Activated CD4-positive, alpha-beta memory T cell treated with anti-CD3 and anti-CD28 coated beads, Interleukin-2, amount 10 ng/mL, durations not matched to agents 7 days and 5 days (primary cell): ENCODE measurements at regions of chr1 and their contacts with region 1.

Region 1: GRCh38 chr1:27044613-27045151 is 32.0 kb upstream of the TENT5B start:
- DNase-seq: peak; percentile 90
- H3K4me3 Mint-ChIP-seq: peak overlapping the region; percentile 76
- H3K27ac Mint-ChIP-seq: peak overlapping the region; percentile 78
- H3K4me1 Mint-ChIP-seq: peaks cover 24% of the 10 kb centered on the region
- H3K27me3 Mint-ChIP-seq: peaks cover 4% of the 10 kb centered on the region

Region 2: DNA sequence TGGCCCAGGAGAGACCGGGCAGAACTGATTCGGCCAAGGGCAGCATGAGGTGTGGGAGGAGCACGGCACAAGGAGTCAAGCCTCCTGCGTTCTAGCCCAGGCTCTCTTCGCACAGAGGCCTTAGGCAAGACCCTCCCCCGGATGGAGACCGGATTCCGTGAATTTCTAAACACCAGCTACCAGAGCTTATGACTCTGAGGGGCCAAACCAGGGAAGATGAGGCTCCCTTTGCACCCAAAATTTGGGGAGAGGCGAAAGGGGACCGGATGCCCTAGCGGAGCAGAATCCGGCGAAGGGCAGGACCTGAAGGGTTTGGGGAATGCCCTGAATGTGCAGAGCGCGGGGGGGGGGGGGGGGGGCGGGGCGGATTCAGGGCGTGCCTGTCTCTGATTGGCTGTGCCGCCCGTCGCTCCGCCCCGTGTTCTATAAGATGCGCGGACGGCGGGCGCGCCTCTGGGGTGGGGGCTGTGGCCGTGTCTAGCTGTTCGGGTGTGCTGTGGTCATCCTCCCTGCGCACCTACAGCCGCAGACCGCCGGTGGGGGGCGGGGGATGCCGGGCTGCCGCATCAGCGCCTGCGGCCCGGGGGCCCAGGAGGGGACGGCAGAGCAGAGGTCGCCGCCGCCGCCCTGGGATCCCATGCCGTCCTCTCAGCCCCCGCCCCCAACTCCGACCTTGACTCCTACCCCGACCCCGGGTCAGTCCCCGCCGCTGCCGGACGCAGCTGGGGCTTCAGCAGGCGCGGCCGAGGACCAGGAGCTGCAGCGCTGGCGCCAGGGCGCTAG is 51.3 kb before region 1 on chr1 and contains the start of gene TRNP1:
- CTCF ChIA-PET with region 1: interaction called, 46 read pairs
- POLR2A ChIA-PET with region 1: no interaction called
- DNase-seq: peak; percentile 70
- H3K4me3 Mint-ChIP-seq: peak within 1 kb of the TSS; percentile 71
- H3K27ac Mint-ChIP-seq: no peak within 1 kb of the TSS
- H3K4me1 Mint-ChIP-seq: peaks cover 16% of the 10 kb centered on the region
- H3K27me3 Mint-ChIP-seq: peaks cover 57% of the 10 kb centered on the region
- total RNA-seq, gene TRNP1: not detected

Region 3: DNA sequence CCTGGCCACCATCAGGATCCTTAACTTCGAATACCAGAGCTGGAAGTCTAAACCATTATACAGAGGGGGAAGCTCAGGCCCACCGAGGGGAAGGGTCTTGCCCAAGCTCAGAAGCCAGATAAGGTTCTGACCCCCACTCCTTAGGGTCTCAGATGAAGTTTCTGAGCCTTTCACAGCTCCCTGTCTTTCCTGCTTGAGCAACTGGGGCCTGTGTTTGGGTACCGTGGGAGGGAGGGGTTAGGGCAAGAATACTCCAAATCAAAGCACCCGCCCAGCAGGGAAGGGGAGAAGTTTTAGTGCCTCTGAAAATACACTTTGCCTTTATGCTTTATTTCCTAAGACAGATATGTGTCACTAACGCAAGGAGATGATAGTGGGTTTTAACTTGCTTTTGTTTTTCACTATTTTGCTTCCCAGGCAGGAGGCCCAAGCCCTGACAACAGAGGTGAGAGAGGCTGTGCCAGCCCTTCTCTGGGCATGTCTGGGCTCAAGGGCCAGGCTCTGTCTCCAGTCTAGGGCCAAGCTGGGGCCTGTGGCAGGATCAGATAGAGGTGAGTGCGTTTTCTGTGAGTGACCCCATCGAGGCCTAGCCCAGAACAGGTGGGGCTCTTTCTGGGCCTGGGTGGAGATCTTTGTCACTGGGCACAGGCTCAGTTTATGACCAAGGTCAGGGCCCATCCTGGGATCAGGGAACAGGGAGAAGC is 11.5 kb before region 1 on chr1:
- CTCF ChIA-PET with region 1: interaction called, 17 read pairs
- POLR2A ChIA-PET with region 1: no interaction called
- DNase-seq: no peak
- H3K4me3 Mint-ChIP-seq: no peak overlapping the region
- H3K27ac Mint-ChIP-seq: no peak overlapping the region
- H3K4me1 Mint-ChIP-seq: no peaks in the 10 kb centered on the region
- H3K27me3 Mint-ChIP-seq: peaks cover 5% of the 10 kb centered on the region

Region 4: DNA sequence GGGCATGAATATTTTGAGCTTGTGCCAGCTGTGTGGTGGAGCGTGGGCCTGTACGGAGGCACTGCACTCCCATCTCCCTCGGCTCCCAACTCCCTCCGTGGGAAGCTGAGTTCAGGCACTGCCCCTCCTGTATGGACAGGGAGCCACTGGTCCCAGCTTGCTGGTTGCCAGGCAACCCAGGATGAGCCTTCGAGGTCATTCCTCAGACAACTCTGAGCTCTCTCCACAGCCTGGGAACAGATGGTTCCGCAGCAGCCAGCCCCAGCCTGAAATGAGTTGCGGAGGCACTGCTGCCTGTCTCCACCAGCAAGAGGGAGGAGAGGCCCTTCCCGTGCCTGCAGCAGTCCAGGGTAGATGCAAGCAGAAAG is 26.4 kb after region 1 on chr1:
- CTCF ChIA-PET with region 1: interaction called, 26 read pairs
- POLR2A ChIA-PET with region 1: no interaction called
- DNase-seq: no peak
- H3K4me3 Mint-ChIP-seq: no peak overlapping the region
- H3K27ac Mint-ChIP-seq: no peak overlapping the region
- H3K4me1 Mint-ChIP-seq: no peaks in the 10 kb centered on the region
- H3K27me3 Mint-ChIP-seq: no peaks in the 10 kb centered on the region

Region 5: DNA sequence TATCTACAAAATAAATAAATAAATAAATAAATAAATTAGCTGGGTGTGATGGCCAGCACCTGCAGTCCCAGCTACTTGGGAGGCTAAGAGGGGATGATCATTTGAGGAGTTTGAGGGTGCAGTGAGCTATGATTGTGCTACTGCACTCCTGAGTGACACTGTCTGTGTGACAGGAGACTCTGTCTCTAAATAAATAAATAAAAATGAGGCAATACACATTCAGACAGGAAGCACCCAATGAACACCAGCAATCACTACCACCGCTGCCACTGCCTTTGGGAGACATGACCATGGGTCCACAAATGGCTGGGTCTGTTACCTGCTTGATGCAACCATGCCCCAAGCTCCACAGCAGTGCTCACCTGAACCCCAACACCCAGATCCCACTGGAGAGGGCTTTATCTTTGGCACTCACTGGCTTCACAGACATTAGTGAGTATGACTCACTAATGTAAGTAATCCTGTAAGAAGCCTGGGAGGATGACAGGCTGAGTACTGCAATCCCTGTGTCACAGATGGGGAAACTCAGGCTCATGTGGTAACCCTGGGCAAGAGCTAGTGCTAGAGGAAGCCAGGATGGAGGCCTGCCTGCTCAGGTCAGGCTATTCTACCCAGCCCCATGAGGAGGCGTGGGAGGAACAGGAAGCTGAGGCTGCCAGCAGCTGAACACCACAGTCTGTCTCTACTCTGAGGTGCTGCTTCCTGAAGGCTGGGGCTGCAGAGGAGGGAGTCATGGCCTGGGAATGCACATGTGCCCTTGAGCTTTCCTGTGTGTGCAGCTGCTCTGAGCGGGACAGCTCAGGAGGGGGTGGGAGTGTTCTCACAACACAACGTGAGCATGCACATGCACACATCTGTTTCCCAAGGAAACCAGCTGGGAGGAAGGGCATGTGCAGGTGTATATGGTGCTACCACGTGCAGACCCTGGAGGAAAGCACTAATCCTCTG is 67.2 kb after region 1 on chr1:
- CTCF ChIA-PET with region 1: interaction called, 15 read pairs
- POLR2A ChIA-PET with region 1: no interaction called
- DNase-seq: peak; percentile 79
- H3K4me3 Mint-ChIP-seq: no peak overlapping the region
- H3K27ac Mint-ChIP-seq: peak overlapping the region; percentile 70
- H3K4me1 Mint-ChIP-seq: peaks cover 43% of the 10 kb centered on the region
- H3K27me3 Mint-ChIP-seq: no peaks in the 10 kb centered on the region

Region 6: DNA sequence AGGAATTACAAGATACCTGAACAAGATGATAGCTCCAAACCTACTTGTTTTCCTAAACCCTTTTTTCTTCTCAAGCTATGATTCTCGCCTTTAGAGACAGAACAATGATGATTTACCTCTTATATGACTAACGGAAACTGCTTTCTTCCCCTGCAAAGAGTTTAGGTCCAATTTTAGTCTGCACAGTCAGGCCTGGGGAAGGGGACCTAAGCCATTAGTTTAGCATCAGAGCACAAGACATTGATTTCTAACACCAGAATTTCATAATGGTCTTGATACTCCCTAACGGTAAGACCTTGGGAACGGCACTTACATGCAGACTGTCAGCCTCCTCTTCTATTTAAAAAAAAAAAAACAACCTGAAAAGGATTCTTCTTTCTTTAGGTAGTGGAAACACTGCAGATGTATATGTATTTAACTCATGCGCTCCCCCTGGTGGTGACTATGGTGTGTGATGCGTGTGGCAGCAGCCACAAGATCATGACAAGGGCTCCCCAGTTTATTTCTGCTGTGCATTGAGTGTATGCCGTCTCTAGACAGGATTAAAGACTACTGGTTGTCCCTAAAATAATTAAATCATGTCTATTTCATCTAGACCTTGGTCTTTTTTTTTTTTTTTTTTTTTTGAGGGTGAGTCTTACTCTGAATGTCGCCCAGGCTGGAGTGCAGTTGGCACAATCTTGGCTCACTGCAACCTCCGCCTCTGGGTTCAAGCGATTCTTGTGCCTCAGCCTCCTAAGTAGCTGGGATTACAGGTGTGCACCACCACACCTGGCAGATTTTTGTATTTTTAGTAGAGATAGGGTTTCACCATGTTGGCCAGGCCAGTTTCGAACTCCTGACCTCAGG is 240.0 kb after region 1 on chr1:
- CTCF ChIA-PET with region 1: interaction called, 33 read pairs
- POLR2A ChIA-PET with region 1: no interaction called
- DNase-seq: peak; percentile 88
- H3K4me3 Mint-ChIP-seq: no peak overlapping the region
- H3K27ac Mint-ChIP-seq: no peak overlapping the region
- H3K4me1 Mint-ChIP-seq: no peaks in the 10 kb centered on the region
- H3K27me3 Mint-ChIP-seq: no peaks in the 10 kb centered on the region